Psoas muscle (tissue), 8 donors: ENCODE measurements at regions of chr20 and their contacts with region 1.

Region 1: GRCh38 chr20:49610701-49611538 is 43.0 kb upstream of the PTGIS start:
- DNase-seq: peak; percentile 80 to 89
- ATAC-seq: peak; percentile 69 to 81 (median 76)
- H3K4me3 ChIP-seq: peak overlapping the region; percentile 46
- H3K27ac ChIP-seq: peak overlapping the region; percentile 63
- H3K4me1 ChIP-seq: peaks cover 16% of the 10 kb centered on the region
- H3K27me3 ChIP-seq: peaks cover 0 to 4% (median 0%) of the 10 kb centered on the region in 3 donors
- CTCF ChIP-seq: peak; percentile 100

Region 2: GRCh38 chr20:49330544-49331239 is 280.2 kb before region 1 on chr20:
- intact Hi-C with region 1: loop called (anchors 2 kb)
- DNase-seq: no peak
- ATAC-seq: no peak
- H3K4me3 ChIP-seq: no peak overlapping the region
- H3K27ac ChIP-seq: no peak overlapping the region
- H3K4me1 ChIP-seq: no peaks in the 10 kb centered on the region
- H3K27me3 ChIP-seq: peaks cover 0 to 10% (median 0%) of the 10 kb centered on the region in 3 donors
- CTCF ChIP-seq: no peak

Region 3: GRCh38 chr20:49541733-49542513 is 69.0 kb before region 1 on chr20:
- intact Hi-C with region 1: loop called (anchors 1 to 2 kb)
- DNase-seq: peak; percentile 64 to 76
- ATAC-seq: peak; percentile 68 to 81 (median 74)
- H3K4me3 ChIP-seq: no peak overlapping the region
- H3K27ac ChIP-seq: no peak overlapping the region
- H3K4me1 ChIP-seq: no peaks in the 10 kb centered on the region
- H3K27me3 ChIP-seq: no peaks in the 10 kb centered on the region
- CTCF ChIP-seq: peak; percentile 77

Region 4: DNA sequence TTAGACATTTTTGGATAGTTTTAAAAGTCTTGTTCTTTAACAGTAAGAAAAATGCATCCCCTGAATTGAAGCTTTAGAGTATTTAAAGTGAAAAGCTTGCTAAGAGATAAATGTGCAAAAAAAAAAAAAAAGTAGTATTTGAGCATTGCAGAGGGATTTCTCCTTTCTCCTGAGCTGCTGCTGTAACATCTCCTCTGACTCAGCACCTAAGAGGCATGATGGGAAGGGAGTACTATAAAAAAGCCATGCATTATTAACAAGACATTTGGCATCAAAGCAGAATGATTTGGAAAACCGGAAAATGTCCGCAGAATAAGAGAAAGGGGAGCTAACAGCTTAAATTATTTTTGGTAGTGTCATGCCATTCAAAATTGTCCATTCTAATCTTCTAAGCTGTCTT is 74.9 kb after region 1 on chr20:
- intact Hi-C with region 1: no loop called
- DNase-seq: no peak
- ATAC-seq: peak in 2 of 4 donors; percentile 65 to 70
- H3K4me3 ChIP-seq: peak overlapping the region; percentile 37
- H3K27ac ChIP-seq: peak overlapping the region; percentile 69
- H3K4me1 ChIP-seq: peaks cover 79% of the 10 kb centered on the region
- H3K27me3 ChIP-seq: no peaks in the 10 kb centered on the region
- CTCF ChIP-seq: no peak

Region 5: DNA sequence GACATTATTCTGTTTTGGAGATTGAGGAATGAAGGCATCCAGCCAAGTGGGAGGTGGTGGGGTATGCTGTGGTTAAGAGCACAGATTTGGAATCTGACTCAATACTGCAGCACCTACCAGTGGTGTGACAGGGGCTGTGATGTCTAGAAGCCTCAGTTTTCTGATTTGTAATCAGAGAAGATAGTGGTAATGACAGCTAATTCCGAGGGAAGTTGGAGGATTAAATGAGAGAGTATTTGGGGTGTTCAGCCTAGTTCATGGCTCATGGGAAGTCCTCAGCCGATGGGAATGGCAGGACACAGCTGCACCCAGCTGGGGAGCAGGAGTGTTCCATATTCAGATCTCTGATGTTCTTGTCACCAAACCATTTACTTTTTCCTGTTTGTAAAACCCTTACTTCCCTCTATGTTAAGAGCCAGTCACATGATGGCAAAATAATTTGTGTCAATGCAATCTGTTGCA is 211.0 kb after region 1 on chr20:
- intact Hi-C with region 1: loop called in 1 of 2 experiments (anchors 5 kb)
- DNase-seq: no peak
- ATAC-seq: peak; percentile 72 to 81 (median 76)
- H3K4me3 ChIP-seq: no peak overlapping the region
- H3K27ac ChIP-seq: peak overlapping the region; percentile 89
- H3K4me1 ChIP-seq: peaks cover 55% of the 10 kb centered on the region
- H3K27me3 ChIP-seq: no peaks in the 10 kb centered on the region
- CTCF ChIP-seq: peak; percentile 30

Region 6: DNA sequence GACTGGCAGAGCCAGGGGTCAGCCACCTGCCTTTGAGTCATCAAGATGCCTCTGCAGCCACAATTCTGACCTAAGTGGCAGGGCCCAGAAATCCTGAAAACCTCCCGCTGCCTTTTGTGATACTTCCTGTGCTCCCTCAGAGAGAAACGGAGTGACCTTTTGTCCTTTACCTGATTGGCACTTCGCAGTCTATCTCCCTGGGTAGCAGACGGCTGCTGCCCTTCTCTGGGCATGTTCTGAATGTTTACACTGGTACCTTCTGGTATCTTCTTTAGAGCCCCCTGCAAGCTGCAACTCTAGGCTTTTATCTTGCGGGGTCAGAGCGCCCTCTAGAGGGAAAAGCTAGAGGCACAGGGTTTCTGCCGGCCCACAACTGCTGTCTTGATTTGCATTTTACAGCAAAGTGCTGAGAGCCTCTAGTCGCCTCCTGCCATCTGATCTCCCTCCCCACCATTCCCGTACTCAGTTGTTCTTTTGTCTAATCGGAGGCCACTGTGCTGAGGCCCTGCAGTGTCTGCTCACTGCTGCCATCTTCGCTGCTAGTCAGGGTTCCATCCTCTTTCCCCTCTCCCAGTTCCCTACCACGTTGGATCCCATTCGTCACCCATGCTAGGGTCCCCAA is 277.5 kb after region 1 on chr20:
- intact Hi-C with region 1: loop called (anchors 2 to 5 kb)
- DNase-seq: no peak
- ATAC-seq: peak; percentile 48 to 67 (median 55)
- H3K4me3 ChIP-seq: no peak overlapping the region
- H3K27ac ChIP-seq: peak overlapping the region; percentile 52
- H3K4me1 ChIP-seq: peaks cover 10% of the 10 kb centered on the region
- H3K27me3 ChIP-seq: no peaks in the 10 kb centered on the region
- CTCF ChIP-seq: peak; percentile 63